SK-N-SH (cell line): ENCODE measurements at regions of chr14 and their contacts with region 1.

Region 1: GRCh38 chr14:75307700-75308379 is 29.2 kb downstream of the FOS start:
- DNase-seq: peak; percentile 70
- H3K4me3 ChIP-seq: peak overlapping the region in 1 of 2 experiments; percentile 46; a peak in 1 of 4 replicates
- H3K27ac ChIP-seq: no peak overlapping the region
- H3K4me1 ChIP-seq: peaks cover 6 to 14% of the 10 kb centered on the region in 2 experiments; a peak in 2 of 4 replicates
- H3K27me3 ChIP-seq: no peaks in the 10 kb centered on the region
- CTCF ChIP-seq: peak; percentile 95
- EP300 ChIP-seq: no peak
- RAD21 ChIP-seq: peak; percentile 97

Region 2: DNA sequence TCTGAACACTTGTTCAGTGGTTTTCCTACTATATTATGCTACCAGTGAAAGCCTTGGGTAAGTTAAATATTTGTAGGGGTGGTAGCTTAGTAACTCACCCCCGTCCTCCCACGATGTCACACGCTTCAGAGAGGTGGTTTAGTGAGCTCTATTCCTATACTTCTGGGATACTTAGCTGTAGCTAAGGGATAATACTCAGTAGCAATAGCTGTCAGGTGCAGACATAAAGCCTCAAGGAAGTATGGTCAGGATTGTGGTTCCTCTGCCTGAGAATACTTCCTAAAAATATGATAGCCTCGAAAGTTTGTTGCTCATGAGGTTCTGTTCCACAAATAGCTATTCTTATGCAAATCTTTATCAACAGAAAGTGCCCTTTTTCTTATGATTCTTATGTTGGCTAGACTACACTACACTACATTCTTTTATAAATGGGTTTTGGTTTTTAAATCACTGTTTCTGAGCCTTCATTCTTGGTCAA is 414.2 kb before region 1 on chr14:
- CTCF ChIA-PET with region 1: no interaction called
- POLR2A ChIA-PET with region 1: no interaction called
- DNase-seq: no peak
- H3K4me3 ChIP-seq: no peak overlapping the region
- H3K27ac ChIP-seq: no peak overlapping the region
- H3K4me1 ChIP-seq: peaks cover 0 to 2% of the 10 kb centered on the region in 2 experiments; a peak in 1 of 4 replicates
- H3K27me3 ChIP-seq: no peaks in the 10 kb centered on the region
- CTCF ChIP-seq: no peak
- EP300 ChIP-seq: no peak
- RAD21 ChIP-seq: no peak

Region 3: GRCh38 chr14:75259467-75259825 is 48.4 kb before region 1 on chr14:
- CTCF ChIA-PET with region 1: no interaction called
- POLR2A ChIA-PET with region 1: no interaction called
- DNase-seq: peak; percentile 50
- H3K4me3 ChIP-seq: peak overlapping the region; percentile 42 to 52; a peak in 3 of 4 replicates
- H3K27ac ChIP-seq: peak overlapping the region; percentile 96 to 98
- H3K4me1 ChIP-seq: peaks cover 17 to 20% of the 10 kb centered on the region in 2 experiments; a peak in 3 of 4 replicates
- H3K27me3 ChIP-seq: no peaks in the 10 kb centered on the region
- CTCF ChIP-seq: peak; percentile 27; the same call in 1 of the 2 replicates
- EP300 ChIP-seq: no peak
- RAD21 ChIP-seq: peak; percentile 9; the same call in 1 of the 2 replicates

Region 4: DNA sequence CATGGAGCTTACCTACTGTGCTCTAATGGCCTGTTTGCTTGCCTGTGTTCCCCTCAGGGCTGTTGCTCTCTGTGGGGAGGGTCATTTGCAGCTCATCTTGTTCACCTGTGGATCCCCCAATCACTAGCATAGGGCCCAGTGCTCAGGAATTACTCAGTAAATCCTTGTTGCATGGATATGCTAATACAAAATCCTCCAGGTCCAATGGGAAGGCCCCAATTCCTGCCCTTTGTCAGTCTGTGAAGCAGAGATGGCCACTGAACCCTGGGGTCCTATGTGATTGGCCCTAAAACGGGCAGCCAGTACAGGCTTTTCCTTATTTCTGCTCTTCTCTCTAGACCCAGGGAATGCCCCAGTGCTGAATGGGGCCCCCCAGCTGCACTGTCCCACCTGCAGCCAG is 14.9 kb after region 1 on chr14:
- CTCF ChIA-PET with region 1: interaction called, 18 read pairs
- POLR2A ChIA-PET with region 1: no interaction called
- DNase-seq: no peak
- H3K4me3 ChIP-seq: no peak overlapping the region
- H3K27ac ChIP-seq: no peak overlapping the region
- H3K4me1 ChIP-seq: peaks cover 0 to 4% of the 10 kb centered on the region in 2 experiments; a peak in 1 of 4 replicates
- H3K27me3 ChIP-seq: no peaks in the 10 kb centered on the region
- CTCF ChIP-seq: no peak
- EP300 ChIP-seq: no peak
- RAD21 ChIP-seq: no peak

Region 5: DNA sequence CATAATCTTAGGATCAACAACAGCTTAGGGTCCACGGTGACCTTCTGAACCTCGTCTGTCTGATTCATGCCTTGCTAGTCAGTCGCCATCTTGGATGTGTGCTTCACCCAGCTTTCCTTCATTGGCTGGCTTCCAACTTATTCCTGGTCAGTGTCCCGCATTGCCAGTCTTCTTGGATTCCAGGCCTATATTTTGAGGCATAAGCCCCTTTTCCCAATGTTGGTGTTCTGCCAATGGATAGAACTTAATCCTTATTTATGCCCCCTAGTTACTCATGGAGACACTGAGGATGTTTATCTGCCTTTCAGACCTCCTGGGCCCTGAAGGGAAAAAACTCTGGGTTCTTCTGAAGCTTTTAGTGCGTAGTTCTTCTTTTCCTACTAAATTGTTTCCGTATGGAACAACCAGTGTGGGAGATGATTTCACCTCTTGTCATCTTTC is 125.8 kb after region 1 on chr14:
- CTCF ChIA-PET with region 1: interaction called, 20 read pairs
- POLR2A ChIA-PET with region 1: interaction called, 5 read pairs
- DNase-seq: peak; percentile 46
- H3K4me3 ChIP-seq: no peak overlapping the region
- H3K27ac ChIP-seq: peak overlapping the region in 1 of 2 experiments; percentile 95; a peak in 2 of 4 replicates
- H3K4me1 ChIP-seq: peaks cover 7 to 80% of the 10 kb centered on the region in 2 experiments; a peak in 3 of 4 replicates
- H3K27me3 ChIP-seq: no peaks in the 10 kb centered on the region
- CTCF ChIP-seq: no peak
- EP300 ChIP-seq: peak in 1 of 2 experiments; percentile 23; a peak in 1 of 4 replicates
- RAD21 ChIP-seq: no peak

Region 6: GRCh38 chr14:75469606-75470237 is 161.9 kb after region 1 on chr14:
- CTCF ChIA-PET with region 1: interaction called, 13 read pairs
- POLR2A ChIA-PET with region 1: no interaction called
- DNase-seq: no peak
- H3K4me3 ChIP-seq: no peak overlapping the region
- H3K27ac ChIP-seq: no peak overlapping the region
- H3K4me1 ChIP-seq: no peaks in the 10 kb centered on the region
- H3K27me3 ChIP-seq: no peaks in the 10 kb centered on the region
- CTCF ChIP-seq: no peak
- EP300 ChIP-seq: no peak
- RAD21 ChIP-seq: no peak